CD4-positive, alpha-beta memory T cell (primary cell): ENCODE measurements at regions of chr16 and their contacts with region 1.

Region 1: DNA sequence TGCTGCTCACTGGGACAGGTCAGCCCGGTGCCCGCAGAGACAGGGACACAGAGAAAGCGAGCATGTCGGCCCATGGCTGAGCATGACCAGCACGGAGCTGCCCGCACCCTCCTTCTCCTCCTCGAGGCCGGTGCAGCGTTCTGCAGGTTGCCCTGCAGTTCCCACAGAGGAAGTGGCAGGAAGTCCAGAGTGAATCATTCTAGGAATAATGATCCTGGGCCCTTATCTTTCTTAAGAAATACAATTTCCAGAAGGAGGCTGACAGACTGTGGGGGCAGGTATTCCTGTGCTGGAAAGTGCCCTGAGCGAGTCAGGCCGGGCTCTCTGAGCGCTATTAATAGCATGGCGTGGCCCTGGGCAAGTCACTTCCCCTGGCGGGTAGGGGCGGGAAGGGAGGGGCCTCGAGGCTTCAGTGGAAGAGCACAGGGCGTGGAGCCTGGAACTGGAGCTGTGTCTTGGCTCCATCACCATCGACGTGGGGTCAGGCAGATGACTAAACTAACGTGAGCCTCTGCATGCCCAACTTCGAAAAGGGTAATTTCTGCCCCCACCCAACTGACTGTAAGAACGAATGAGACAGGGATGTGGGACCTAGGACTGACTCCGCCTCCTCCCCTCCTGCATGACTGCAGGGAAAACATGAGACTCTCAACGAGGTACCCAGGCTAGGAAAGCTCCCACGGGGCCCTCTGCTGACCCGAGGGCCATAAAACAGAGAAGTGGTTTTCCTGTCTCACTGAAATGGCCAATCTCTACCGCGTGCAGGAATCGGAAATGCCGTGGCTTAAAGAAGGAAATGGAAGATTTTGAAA is 9.8 kb downstream of the TMEM204 start:
- DNase-seq: peak in 4 of 5 donors; percentile 15 to 76 (median 38)
- H3K4me3 ChIP-seq: peak overlapping the region in 1 of 2 donors; percentile 6
- H3K4me3 Mint-ChIP-seq: peak overlapping the region in 7 of 8 donors; percentile 72 to 84 (median 79)
- H3K27ac ChIP-seq: peak overlapping the region; percentile 42
- H3K27ac Mint-ChIP-seq: peak overlapping the region; percentile 27 to 94 (median 80)
- H3K4me1 ChIP-seq: peaks cover 85% of the 10 kb centered on the region
- H3K4me1 Mint-ChIP-seq: peaks cover 29 to 90% (median 66%) of the 10 kb centered on the region in 4 donors
- H3K27me3 ChIP-seq: no peaks in the 10 kb centered on the region
- H3K27me3 Mint-ChIP-seq: no peaks in the 10 kb centered on the region

Region 2: DNA sequence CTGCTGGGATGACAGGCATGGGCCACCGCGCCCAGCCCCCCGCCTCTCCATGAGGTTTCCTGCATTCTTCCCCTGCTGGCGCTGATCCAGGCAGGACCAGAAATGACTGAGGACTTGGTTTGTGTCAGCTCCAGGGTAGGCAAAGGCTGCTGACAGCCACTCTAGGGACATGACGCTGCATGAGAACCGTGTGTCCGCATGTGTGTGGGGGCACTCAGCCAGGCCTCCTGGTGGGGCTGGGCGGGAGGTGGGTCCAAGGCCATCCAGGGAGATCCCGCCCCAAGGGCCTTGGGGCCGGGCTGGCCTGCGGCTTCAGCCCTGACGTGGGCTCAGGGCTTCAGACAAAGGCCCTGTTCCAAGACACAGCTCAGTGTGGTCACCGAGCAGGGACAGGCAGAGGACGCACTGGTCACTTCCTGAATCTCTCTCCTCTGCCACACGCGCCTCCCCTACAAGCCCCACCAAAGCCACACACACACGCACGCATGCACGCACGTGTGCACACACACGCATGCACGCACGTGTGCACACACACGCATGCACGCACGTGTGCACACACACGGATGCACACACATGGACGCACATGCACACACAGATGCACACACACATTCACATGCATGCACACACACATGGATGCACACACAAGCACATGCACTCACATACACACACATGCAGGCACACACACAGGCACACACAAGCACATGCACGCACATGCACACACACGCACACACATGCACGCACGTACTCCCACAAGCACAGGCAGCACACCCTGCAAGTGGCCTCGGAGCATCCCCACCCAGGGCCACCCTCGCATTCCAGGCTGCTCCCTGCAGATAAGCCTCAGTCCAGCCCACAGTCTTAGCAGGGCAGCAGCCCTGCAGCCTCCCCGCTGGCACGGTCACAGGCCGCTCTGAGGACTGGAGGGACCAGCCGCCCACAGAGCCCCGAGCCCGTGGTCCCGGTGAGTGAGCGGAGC is 15.2 kb before region 1 on chr16:
- CTCF ChIA-PET with region 1: no interaction called
- POLR2A ChIA-PET with region 1: interaction called, 47 read pairs
- intact Hi-C with region 1: no loop called
- DNase-seq: no peak
- H3K4me3 ChIP-seq: no peak overlapping the region
- H3K4me3 Mint-ChIP-seq: peak overlapping the region in 5 of 8 donors; percentile 59 to 76 (median 67)
- H3K27ac ChIP-seq: no peak overlapping the region
- H3K27ac Mint-ChIP-seq: peak overlapping the region; percentile 43 to 91 (median 83)
- H3K4me1 ChIP-seq: peaks cover 46% of the 10 kb centered on the region
- H3K4me1 Mint-ChIP-seq: peaks cover 16 to 43% (median 28%) of the 10 kb centered on the region in 4 donors
- H3K27me3 ChIP-seq: no peaks in the 10 kb centered on the region
- H3K27me3 Mint-ChIP-seq: no peaks in the 10 kb centered on the region

Region 3: GRCh38 chr16:1556254-1556653 is 13.0 kb after region 1 on chr16:
- CTCF ChIA-PET with region 1: interaction called, 4 read pairs
- POLR2A ChIA-PET with region 1: interaction called, 15 read pairs
- intact Hi-C with region 1: loop called (anchors 2 kb)
- DNase-seq: no peak
- H3K4me3 ChIP-seq: no peak overlapping the region
- H3K4me3 Mint-ChIP-seq: no peak overlapping the region
- H3K27ac ChIP-seq: no peak overlapping the region
- H3K27ac Mint-ChIP-seq: peak overlapping the region in 1 of 7 donors; percentile 53
- H3K4me1 ChIP-seq: peaks cover 29% of the 10 kb centered on the region
- H3K4me1 Mint-ChIP-seq: peaks cover 23 to 49% (median 38%) of the 10 kb centered on the region in 4 donors
- H3K27me3 ChIP-seq: no peaks in the 10 kb centered on the region
- H3K27me3 Mint-ChIP-seq: no peaks in the 10 kb centered on the region